Gastrocnemius medialis (tissue), 4 donors: ENCODE measurements at regions of chr16 and their contacts with region 1.

Region 1: DNA sequence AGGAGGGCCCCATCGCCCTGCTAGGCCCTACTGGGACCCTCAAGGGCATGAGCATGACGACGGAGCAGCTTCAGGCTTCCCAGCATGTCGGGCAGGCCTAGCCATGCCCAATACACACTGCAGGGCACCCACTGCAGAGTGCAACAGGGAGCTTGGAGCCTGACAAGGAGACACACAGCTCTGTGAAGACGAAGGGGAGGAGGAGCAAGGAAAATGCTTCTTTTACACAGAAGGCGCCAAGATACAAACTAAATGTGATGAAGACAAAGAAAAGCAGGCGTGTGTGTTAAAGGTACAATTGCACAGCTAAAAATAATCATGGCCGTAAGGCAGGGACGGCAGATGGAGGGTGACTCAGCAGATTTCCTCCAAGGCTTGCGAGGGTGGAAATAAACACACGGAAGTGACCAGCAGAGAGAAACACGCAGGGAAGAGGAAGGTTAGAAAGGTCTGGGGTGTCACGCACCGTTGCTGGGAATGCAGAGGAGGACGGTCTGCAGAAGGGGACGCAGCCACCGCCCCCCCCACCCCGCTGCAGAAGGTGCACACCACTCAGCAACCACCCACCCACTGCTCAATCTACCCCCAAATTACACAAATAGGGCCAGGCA is 108.5 kb downstream of the ZNF778 start:
- DNase-seq: peak; percentile 53 to 71
- ATAC-seq: peak; percentile 50 to 59
- H3K4me3 ChIP-seq: peak overlapping the region; percentile 15 to 32 (median 30)
- H3K27ac ChIP-seq: peak overlapping the region; percentile 92 to 96 (median 93)
- H3K4me1 ChIP-seq: peaks cover 83 to 90% of the 10 kb centered on the region in 2 donors
- H3K27me3 ChIP-seq: no peaks in the 10 kb centered on the region
- CTCF ChIP-seq: no peak
- POLR2A ChIP-seq: no peak

Region 2: DNA sequence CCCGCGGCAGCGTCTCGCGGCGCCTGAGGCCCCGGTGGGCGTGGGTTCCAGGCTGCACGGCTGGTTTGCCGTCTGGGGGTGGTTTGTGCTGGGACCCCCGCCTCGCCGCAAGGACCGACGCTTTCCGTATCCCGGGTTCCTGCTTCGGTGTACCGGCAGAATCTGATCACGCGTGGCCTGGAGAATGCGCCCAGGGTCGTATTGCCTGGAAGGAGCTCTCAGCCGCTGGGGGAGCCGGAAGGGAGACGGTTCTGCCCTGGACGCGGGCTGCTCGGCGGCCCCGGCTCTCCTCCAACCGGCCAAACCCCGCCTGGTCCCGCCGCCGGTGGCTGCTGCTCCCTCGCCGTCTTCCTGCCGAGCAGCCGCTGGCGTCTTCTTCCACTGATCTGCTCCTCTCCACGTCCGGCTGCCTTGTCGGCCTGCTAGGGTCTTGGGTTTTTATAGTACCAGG is 68.7 kb before region 1 on chr16:
- in situ Hi-C with region 1: no loop called
- intact Hi-C with region 1: no loop called
- DNase-seq: no peak
- ATAC-seq: peak in 1 of 2 donors; percentile 41
- H3K4me3 ChIP-seq: peak overlapping the region; percentile 32 to 53 (median 46)
- H3K27ac ChIP-seq: no peak overlapping the region
- H3K4me1 ChIP-seq: peaks cover 4 to 8% of the 10 kb centered on the region in 2 donors
- H3K27me3 ChIP-seq: peaks cover 24 to 30% (median 26%) of the 10 kb centered on the region in 3 donors
- CTCF ChIP-seq: no peak
- POLR2A ChIP-seq: no peak

Region 3: GRCh38 chr16:89507834-89508590 is 182.0 kb after region 1 on chr16 and contains the start of gene SPG7:
- in situ Hi-C with region 1: loop called in 2 of 4 experiments (anchors 10 to 25 kb)
- intact Hi-C with region 1: no loop called
- DNase-seq: peak; percentile 59 to 77
- ATAC-seq: peak; percentile 87 to 92
- H3K4me3 ChIP-seq: peak within 1 kb of the TSS; percentile 70 to 98 (median 86)
- H3K27ac ChIP-seq: peak within 1 kb of the TSS; percentile 82 to 98 (median 94)
- H3K4me1 ChIP-seq: peaks cover 26 to 31% of the 10 kb centered on the region in 2 donors
- H3K27me3 ChIP-seq: no peaks in the 10 kb centered on the region
- CTCF ChIP-seq: peak in 2 of 5 experiments; percentile 7 to 19
- POLR2A ChIP-seq: peak; percentile 98
- total RNA-seq, gene SPG7: 67.7 to 117 (median 100.0) TPM

Region 4: GRCh38 chr16:90031931-90032687 is 706.1 kb after region 1 on chr16:
- in situ Hi-C with region 1: no loop called
- intact Hi-C with region 1: no loop called
- DNase-seq: no peak
- ATAC-seq: no peak
- H3K4me3 ChIP-seq: no peak overlapping the region
- H3K27ac ChIP-seq: no peak overlapping the region
- H3K4me1 ChIP-seq: no peaks in the 10 kb centered on the region
- H3K27me3 ChIP-seq: no peaks in the 10 kb centered on the region
- CTCF ChIP-seq: no peak
- POLR2A ChIP-seq: no peak